ENCODE measurements at regions of chrX and their contacts with region 1.

Region 1: GRCh38 chrX:155094468-155095061 is 23.3 kb downstream of the BRCC3 start:
- DNase-seq: peak in 7 of 9 donors; percentile 18 to 57 (median 39)
- ATAC-seq: peak; percentile 87
- H3K4me3 ChIP-seq: no peak overlapping the region
- H3K4me3 Mint-ChIP-seq: no peak overlapping the region
- H3K27ac ChIP-seq: no peak overlapping the region
- H3K27ac Mint-ChIP-seq: peak overlapping the region in 1 of 9 donors; percentile 9
- H3K4me1 ChIP-seq: no peaks in the 10 kb centered on the region
- H3K4me1 Mint-ChIP-seq: peaks cover 0 to 5% (median 4%) of the 10 kb centered on the region in 7 donors
- H3K27me3 ChIP-seq: no peaks in the 10 kb centered on the region
- H3K27me3 Mint-ChIP-seq: no peaks in the 10 kb centered on the region

Region 2: GRCh38 chrX:155148724-155149537 is 54.4 kb after region 1 on chrX:
- CTCF ChIA-PET with region 1: no interaction called
- POLR2A ChIA-PET with region 1: no interaction called
- intact Hi-C with region 1: loop called in 1 of 2 experiments (anchors 5 kb)
- DNase-seq: peak in 8 of 9 donors; percentile 3 to 38 (median 25)
- ATAC-seq: peak; percentile 37
- H3K4me3 ChIP-seq: no peak overlapping the region
- H3K4me3 Mint-ChIP-seq: no peak overlapping the region
- H3K27ac ChIP-seq: no peak overlapping the region
- H3K27ac Mint-ChIP-seq: peak overlapping the region in 3 of 9 donors; percentile 38 to 73 (median 40)
- H3K4me1 ChIP-seq: no peaks in the 10 kb centered on the region
- H3K4me1 Mint-ChIP-seq: peaks cover 0 to 9% (median 4%) of the 10 kb centered on the region in 7 donors
- H3K27me3 ChIP-seq: no peaks in the 10 kb centered on the region
- H3K27me3 Mint-ChIP-seq: peaks cover 0 to 11% (median 0%) of the 10 kb centered on the region in 5 donors

Region 3: GRCh38 chrX:155819966-155820491 is 725.5 kb after region 1 on chrX:
- CTCF ChIA-PET with region 1: no interaction called
- POLR2A ChIA-PET with region 1: no interaction called
- intact Hi-C with region 1: loop called (anchors 1 kb)
- DNase-seq: peak in 7 of 9 donors; percentile 12 to 50 (median 39)
- ATAC-seq: peak; percentile 64
- H3K4me3 ChIP-seq: no peak overlapping the region
- H3K4me3 Mint-ChIP-seq: no peak overlapping the region
- H3K27ac ChIP-seq: no peak overlapping the region
- H3K27ac Mint-ChIP-seq: no peak overlapping the region
- H3K4me1 ChIP-seq: no peaks in the 10 kb centered on the region
- H3K4me1 Mint-ChIP-seq: peaks cover 0 to 3% (median 0%) of the 10 kb centered on the region in 7 donors
- H3K27me3 ChIP-seq: no peaks in the 10 kb centered on the region
- H3K27me3 Mint-ChIP-seq: peaks cover 8 to 32% (median 12%) of the 10 kb centered on the region in 5 donors

Measured in naive thymus-derived CD4-positive, alpha-beta T cell (primary cell).